HepG2 (cell line): ENCODE measurements at regions of chr1 and their contacts with region 1.

Region 1: GRCh38 chr1:179002552-179003345 is 22.9 kb upstream of the FAM20B start:
- DNase-seq: peak; percentile 79
- ATAC-seq: peak; percentile 92
- H3K4me3 ChIP-seq: peak overlapping the region; percentile 38 to 71 (median 57); a peak in 5 of 6 replicates
- H3K27ac ChIP-seq: no peak overlapping the region
- H3K4me1 ChIP-seq: peaks cover 52% of the 10 kb centered on the region
- H3K27me3 ChIP-seq: no peaks in the 10 kb centered on the region
- CTCF ChIP-seq: peak; percentile 96
- EP300 ChIP-seq: no peak
- POLR2A ChIP-seq: no peak
- RAD21 ChIP-seq: peak; percentile 96

Region 2: GRCh38 chr1:178310685-178311105 is 692.1 kb before region 1 on chr1:
- CTCF ChIA-PET with region 1: no interaction called
- POLR2A ChIA-PET with region 1: no interaction called
- in situ Hi-C with region 1: no loop called
- intact Hi-C with region 1: loop called (anchors 10 kb)
- DNase-seq: peak; percentile 77
- ATAC-seq: peak; percentile 83
- H3K4me3 ChIP-seq: no peak overlapping the region
- H3K27ac ChIP-seq: no peak overlapping the region
- H3K4me1 ChIP-seq: no peaks in the 10 kb centered on the region
- H3K27me3 ChIP-seq: no peaks in the 10 kb centered on the region
- CTCF ChIP-seq: peak; percentile 80
- EP300 ChIP-seq: no peak
- POLR2A ChIP-seq: no peak
- RAD21 ChIP-seq: peak; percentile 51; the same call in 1 of the 2 replicates

Region 3: GRCh38 chr1:178532392-178532791 is 470.4 kb before region 1 on chr1:
- CTCF ChIA-PET with region 1: interaction called, 15 read pairs
- POLR2A ChIA-PET with region 1: interaction called, 5 read pairs
- in situ Hi-C with region 1: loop called (anchors 5 kb)
- intact Hi-C with region 1: loop called (anchors 1 kb)
- DNase-seq: peak; percentile 57
- ATAC-seq: peak; percentile 73
- H3K4me3 ChIP-seq: peak overlapping the region; percentile 32 to 65 (median 44); a peak in 5 of 6 replicates
- H3K27ac ChIP-seq: no peak overlapping the region
- H3K4me1 ChIP-seq: peaks cover 57% of the 10 kb centered on the region
- H3K27me3 ChIP-seq: peaks cover 0 to 10% of the 10 kb centered on the region in 2 experiments; a peak in 1 of 5 replicates
- CTCF ChIP-seq: peak; percentile 96
- EP300 ChIP-seq: no peak
- POLR2A ChIP-seq: no peak
- RAD21 ChIP-seq: peak; percentile 89

Region 4: GRCh38 chr1:178768423-178768822 is 234.3 kb before region 1 on chr1:
- CTCF ChIA-PET with region 1: interaction called, 27 read pairs
- POLR2A ChIA-PET with region 1: no interaction called
- in situ Hi-C with region 1: loop called (anchors 5 kb)
- intact Hi-C with region 1: loop called (anchors 2 kb)
- DNase-seq: peak; percentile 20
- ATAC-seq: peak; percentile 66
- H3K4me3 ChIP-seq: no peak overlapping the region
- H3K27ac ChIP-seq: no peak overlapping the region
- H3K4me1 ChIP-seq: no peaks in the 10 kb centered on the region; the same call in 1 of the 2 replicates
- H3K27me3 ChIP-seq: no peaks in the 10 kb centered on the region
- CTCF ChIP-seq: peak; percentile 82
- EP300 ChIP-seq: no peak
- POLR2A ChIP-seq: no peak
- RAD21 ChIP-seq: 0 out of 2 replicates have a peak, but pooled peaks have one; percentile 17

Region 5: DNA sequence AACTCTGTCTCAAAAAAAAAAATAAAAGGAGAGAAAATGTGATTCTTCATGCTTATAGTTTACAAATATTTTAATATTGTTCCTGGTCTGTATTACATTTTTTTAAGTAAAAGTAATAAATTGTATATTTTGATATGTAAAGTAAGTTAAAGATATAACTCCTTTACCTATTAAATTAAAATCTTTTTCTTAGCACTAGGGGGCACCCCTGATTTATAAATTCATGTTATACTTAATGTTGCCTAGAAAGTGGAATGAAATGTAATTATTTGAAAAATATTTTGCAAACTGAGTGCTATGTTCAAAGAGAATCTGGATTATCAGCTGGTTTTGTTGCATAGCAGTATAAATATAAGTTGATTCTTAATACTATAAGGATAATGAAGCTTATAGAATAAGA is 228.5 kb before region 1 on chr1:
- CTCF ChIA-PET with region 1: interaction called, 27 read pairs
- POLR2A ChIA-PET with region 1: no interaction called
- in situ Hi-C with region 1: loop called (anchors 5 kb)
- intact Hi-C with region 1: loop called (anchors 2 kb)
- DNase-seq: peak; percentile 18
- ATAC-seq: no peak
- H3K4me3 ChIP-seq: no peak overlapping the region
- H3K27ac ChIP-seq: no peak overlapping the region
- H3K4me1 ChIP-seq: peaks cover 10% of the 10 kb centered on the region
- H3K27me3 ChIP-seq: no peaks in the 10 kb centered on the region
- CTCF ChIP-seq: no peak
- EP300 ChIP-seq: no peak
- POLR2A ChIP-seq: no peak
- RAD21 ChIP-seq: no peak

Region 6: GRCh38 chr1:178870944-178871343 is 131.8 kb before region 1 on chr1 and contains the start of gene ANGPTL1:
- CTCF ChIA-PET with region 1: no interaction called
- POLR2A ChIA-PET with region 1: no interaction called
- in situ Hi-C with region 1: no loop called
- intact Hi-C with region 1: loop called (anchors 2 kb)
- DNase-seq: peak; percentile 88
- ATAC-seq: peak; percentile 88
- H3K4me3 ChIP-seq: peak within 1 kb of the TSS; percentile 46 to 75 (median 68)
- H3K27ac ChIP-seq: peak within 1 kb of the TSS; percentile 63
- H3K4me1 ChIP-seq: peaks cover 54% of the 10 kb centered on the region
- H3K27me3 ChIP-seq: no peaks in the 10 kb centered on the region
- CTCF ChIP-seq: no peak
- EP300 ChIP-seq: peak in 1 of 2 experiments; percentile 65; a peak in 2 of 4 replicates
- POLR2A ChIP-seq: no peak
- RAD21 ChIP-seq: no peak
- total RNA-seq, gene ANGPTL1: 2.2 and 2.9 TPM in 2 replicates

Region 7: DNA sequence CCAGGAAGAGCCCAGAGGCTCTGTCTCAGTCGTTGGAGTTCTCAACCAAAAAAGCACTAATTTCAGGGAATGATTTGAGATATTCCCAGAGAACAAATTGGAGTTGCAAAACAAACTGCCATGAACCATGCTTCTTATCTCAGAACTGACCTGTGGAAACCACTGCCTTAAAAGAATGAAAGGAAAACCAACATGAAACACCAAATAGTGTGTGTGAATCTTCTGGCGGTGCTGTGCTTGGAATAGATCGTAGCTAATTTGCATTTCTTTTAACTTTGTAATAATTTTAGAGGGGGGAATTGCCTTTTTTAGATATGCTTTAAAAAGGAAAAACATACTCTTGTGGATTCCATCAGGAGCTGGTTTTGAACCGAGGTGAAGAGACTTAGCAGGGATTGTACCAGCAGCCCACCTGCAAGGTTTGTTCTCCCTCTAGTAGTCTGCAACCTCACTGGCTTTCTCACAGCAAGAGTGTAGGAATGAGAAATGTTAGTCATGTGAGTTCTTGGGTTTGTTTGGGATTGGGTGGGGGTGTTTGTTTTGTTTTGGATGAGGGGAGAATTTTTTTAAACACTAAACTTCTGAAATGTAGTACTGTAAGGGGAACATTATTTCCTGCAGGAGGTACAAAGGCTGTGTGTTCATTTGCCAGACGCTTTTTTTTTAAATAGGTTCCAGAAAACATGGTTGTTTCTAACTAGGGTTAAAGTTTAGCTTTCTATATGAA is 86.1 kb before region 1 on chr1:
- CTCF ChIA-PET with region 1: no interaction called
- POLR2A ChIA-PET with region 1: interaction called, 3 read pairs
- in situ Hi-C with region 1: no loop called
- intact Hi-C with region 1: loop called (anchors 5 kb)
- DNase-seq: peak; percentile 91
- ATAC-seq: peak; percentile 92
- H3K4me3 ChIP-seq: peak overlapping the region in 1 of 3 experiments; percentile 34; a peak in 1 of 6 replicates
- H3K27ac ChIP-seq: peak overlapping the region; percentile 65
- H3K4me1 ChIP-seq: peaks cover 71% of the 10 kb centered on the region
- H3K27me3 ChIP-seq: no peaks in the 10 kb centered on the region
- CTCF ChIP-seq: no peak
- EP300 ChIP-seq: peak in 1 of 2 experiments; percentile 80; a peak in 2 of 4 replicates
- POLR2A ChIP-seq: peak; percentile 39 to 62; a peak in 2 of 4 replicates
- RAD21 ChIP-seq: no peak

Region 8: DNA sequence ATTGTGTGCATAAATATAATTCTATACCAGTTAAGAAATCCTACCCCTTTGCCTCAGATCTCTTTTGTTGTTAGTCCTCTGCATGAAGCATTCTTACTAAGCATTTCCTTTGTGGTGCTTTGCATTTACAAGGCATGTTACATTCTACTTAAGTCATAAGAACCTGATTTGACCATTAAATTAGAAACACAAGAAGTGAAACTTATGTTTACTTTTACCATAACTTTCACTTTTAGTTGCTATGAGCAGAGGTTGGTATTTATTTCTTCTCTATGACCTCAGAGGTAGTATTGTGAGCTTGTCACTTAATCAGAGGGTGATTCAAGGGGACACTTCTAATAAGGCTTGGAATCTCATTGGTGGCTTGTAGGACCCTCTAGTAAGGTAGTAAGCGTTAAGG is 32.0 kb after region 1 on chr1:
- CTCF ChIA-PET with region 1: no interaction called
- POLR2A ChIA-PET with region 1: no interaction called
- in situ Hi-C with region 1: no loop called
- intact Hi-C with region 1: no loop called
- DNase-seq: no peak
- ATAC-seq: no peak
- H3K4me3 ChIP-seq: no peak overlapping the region
- H3K27ac ChIP-seq: no peak overlapping the region
- H3K4me1 ChIP-seq: peaks cover 66% of the 10 kb centered on the region
- H3K27me3 ChIP-seq: no peaks in the 10 kb centered on the region
- CTCF ChIP-seq: no peak
- EP300 ChIP-seq: no peak
- POLR2A ChIP-seq: no peak
- RAD21 ChIP-seq: no peak

Region 9: GRCh38 chr1:179229214-179230140 is 226.7 kb after region 1 on chr1 and contains the start of gene ABL2:
- CTCF ChIA-PET with region 1: no interaction called
- POLR2A ChIA-PET with region 1: no interaction called
- in situ Hi-C with region 1: no loop called
- intact Hi-C with region 1: no loop called
- DNase-seq: peak; percentile 18
- ATAC-seq: peak; percentile 75
- H3K4me3 ChIP-seq: peak within 1 kb of the TSS; percentile 88 to 96 (median 96)
- H3K27ac ChIP-seq: peak within 1 kb of the TSS; percentile 87
- H3K4me1 ChIP-seq: peaks cover 68% of the 10 kb centered on the region
- H3K27me3 ChIP-seq: no peaks in the 10 kb centered on the region; a peak in 1 of 5 replicates
- CTCF ChIP-seq: no peak
- EP300 ChIP-seq: no peak
- POLR2A ChIP-seq: peak in 1 of 2 experiments; percentile 44; a peak in 1 of 4 replicates
- RAD21 ChIP-seq: 0 out of 2 replicates have a peak, but pooled peaks have one; percentile 16
- total RNA-seq, gene ABL2: 6.0 and 11.6 TPM in 2 replicates